HCT116 (cell line): ENCODE measurements at regions of chr20 and their contacts with region 1.

Region 1: DNA sequence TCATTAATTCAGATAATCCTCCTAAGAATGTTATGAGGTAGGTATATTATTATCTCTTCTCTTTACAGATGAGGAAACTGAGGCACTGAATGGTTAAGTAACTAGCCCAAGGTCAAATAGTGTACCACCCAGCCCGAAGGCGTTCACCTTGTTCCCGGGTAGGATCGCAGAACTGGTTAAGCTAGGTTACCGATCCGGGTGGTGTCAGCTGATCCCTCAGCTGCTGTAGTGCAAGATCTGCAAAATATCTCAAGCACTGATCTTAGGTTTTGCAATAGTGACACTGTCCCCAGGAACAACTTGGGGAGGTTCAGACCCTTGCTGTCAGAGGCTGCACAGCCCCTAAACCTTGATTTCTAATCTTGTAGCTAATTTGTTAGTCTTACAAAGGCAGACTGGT is 28.2 kb downstream of the SLC52A3 start:
- DNase-seq: no peak
- ATAC-seq: no peak
- H3K4me3 ChIP-seq: no peak overlapping the region
- H3K27ac ChIP-seq: no peak overlapping the region
- H3K4me1 ChIP-seq: peaks cover 0 to 7% of the 10 kb centered on the region in 2 experiments; a peak in 1 of 4 replicates
- H3K27me3 ChIP-seq: no peaks in the 10 kb centered on the region
- CTCF ChIP-seq: no peak
- POLR2A ChIP-seq: no peak
- RAD21 ChIP-seq: no peak

Region 2: DNA sequence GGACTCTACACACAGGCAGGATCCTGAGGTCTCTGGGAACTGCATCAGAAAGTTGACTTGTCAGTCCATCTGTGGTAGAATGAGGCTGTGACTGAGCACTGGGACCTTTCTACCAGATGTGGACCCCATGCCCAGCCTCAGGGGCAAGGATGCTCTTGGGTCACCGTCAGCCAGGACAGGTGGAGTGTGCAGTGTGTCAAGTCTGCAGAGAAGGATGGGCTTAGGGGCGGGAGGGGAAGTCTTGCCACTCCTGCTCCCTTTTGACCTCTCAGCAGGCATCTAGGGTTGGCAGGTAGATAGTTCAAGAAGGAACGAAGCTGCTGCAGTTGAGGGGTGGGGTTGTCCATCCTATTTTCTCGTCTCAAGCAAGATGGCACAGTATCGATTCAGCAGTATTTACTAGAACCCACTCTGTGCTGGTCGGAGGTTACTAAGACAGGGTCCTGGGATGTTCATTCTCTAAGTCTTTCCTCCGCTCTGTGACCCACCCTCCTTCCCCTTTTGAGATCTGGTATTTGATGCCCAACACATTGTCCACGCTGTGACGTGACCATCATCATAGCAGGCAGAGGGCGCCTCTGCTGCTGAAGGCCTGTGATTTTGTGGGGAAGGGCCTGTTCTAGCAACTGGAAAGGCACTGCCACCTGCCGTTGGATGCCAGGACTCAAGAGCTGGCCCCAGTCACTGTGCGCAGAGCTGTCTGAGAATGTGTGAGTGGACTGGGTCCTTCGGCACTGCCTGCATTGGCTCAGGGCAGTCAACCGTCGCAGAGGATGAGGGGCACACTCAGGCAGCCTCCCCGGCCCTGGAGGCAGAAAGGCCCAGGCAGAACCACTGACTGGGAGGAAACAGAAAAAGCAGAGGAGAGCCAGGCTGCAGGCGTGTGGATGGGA is 308.9 kb before region 1 on chr20:
- CTCF ChIA-PET with region 1: interaction called, 21 read pairs
- POLR2A ChIA-PET with region 1: no interaction called
- RAD21 ChIA-PET with region 1: interaction called in 1 of 2 experiments, 3 read pairs
- intact Hi-C with region 1: no loop called
- DNase-seq: peak; percentile 69
- ATAC-seq: peak; percentile 89
- H3K4me3 ChIP-seq: no peak overlapping the region
- H3K27ac ChIP-seq: no peak overlapping the region
- H3K4me1 ChIP-seq: peaks cover 0 to 5% of the 10 kb centered on the region in 2 experiments; a peak in 1 of 4 replicates
- H3K27me3 ChIP-seq: no peaks in the 10 kb centered on the region
- CTCF ChIP-seq: peak; percentile 83 to 99 (median 91)
- POLR2A ChIP-seq: no peak
- RAD21 ChIP-seq: peak; percentile 86

Region 3: GRCh38 chr20:645318-646106 is 94.6 kb before region 1 on chr20:
- CTCF ChIA-PET with region 1: interaction called, 14 read pairs
- POLR2A ChIA-PET with region 1: no interaction called
- RAD21 ChIA-PET with region 1: no interaction called
- intact Hi-C with region 1: no loop called
- DNase-seq: peak; percentile 41
- ATAC-seq: peak; percentile 88
- H3K4me3 ChIP-seq: no peak overlapping the region
- H3K27ac ChIP-seq: peak overlapping the region; percentile 16
- H3K4me1 ChIP-seq: peaks cover 13 to 32% of the 10 kb centered on the region in 2 experiments
- H3K27me3 ChIP-seq: no peaks in the 10 kb centered on the region
- CTCF ChIP-seq: peak; percentile 78 to 94 (median 93)
- POLR2A ChIP-seq: no peak
- RAD21 ChIP-seq: peak; percentile 84

Region 4: DNA sequence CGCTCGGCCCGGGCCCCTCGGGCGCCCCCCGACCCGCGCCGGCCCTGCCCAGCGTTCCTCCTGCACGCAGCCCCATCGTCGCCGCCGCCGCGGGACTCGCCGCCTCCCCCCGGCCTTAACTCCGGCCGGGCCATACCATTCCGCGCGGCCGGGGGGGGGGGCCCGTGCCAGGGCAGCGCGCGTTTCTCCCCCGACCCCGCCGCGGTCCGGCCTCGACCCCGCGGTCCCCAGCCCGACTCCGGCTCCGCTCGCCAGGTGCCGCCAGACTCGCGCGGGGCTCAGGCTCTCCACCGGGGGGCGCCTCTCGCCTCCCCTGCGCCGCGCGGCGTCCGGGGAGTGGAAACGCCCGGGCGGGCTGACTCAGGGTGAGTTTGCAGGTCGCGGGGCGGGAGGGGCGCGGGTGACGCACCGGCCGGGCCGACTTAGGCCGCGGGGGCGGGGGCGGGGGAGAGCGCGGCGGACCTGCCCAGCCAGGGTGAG is 87.0 kb before region 1 on chr20 and contains the start of gene SRXN1:
- CTCF ChIA-PET with region 1: no interaction called
- POLR2A ChIA-PET with region 1: no interaction called
- RAD21 ChIA-PET with region 1: no interaction called
- intact Hi-C with region 1: loop called (anchors 1 kb)
- DNase-seq: peak; percentile 81
- ATAC-seq: peak; percentile 87
- H3K4me3 ChIP-seq: peak within 1 kb of the TSS; percentile 67 to 98
- H3K27ac ChIP-seq: peak within 1 kb of the TSS; percentile 92
- H3K4me1 ChIP-seq: peaks cover 11 to 26% of the 10 kb centered on the region in 2 experiments
- H3K27me3 ChIP-seq: no peaks in the 10 kb centered on the region
- CTCF ChIP-seq: peak; percentile 52 to 90 (median 64)
- POLR2A ChIP-seq: peak; percentile 70
- RAD21 ChIP-seq: peak; percentile 56
- total RNA-seq, gene SRXN1: 80.8 TPM

Region 5: GRCh38 chr20:667391-667964 is 72.7 kb before region 1 on chr20:
- CTCF ChIA-PET with region 1: interaction called, 8 read pairs
- POLR2A ChIA-PET with region 1: no interaction called
- RAD21 ChIA-PET with region 1: no interaction called
- intact Hi-C with region 1: loop called (anchors 2 kb)
- DNase-seq: no peak
- ATAC-seq: peak; percentile 87
- H3K4me3 ChIP-seq: no peak overlapping the region
- H3K27ac ChIP-seq: no peak overlapping the region
- H3K4me1 ChIP-seq: peaks cover 9 to 10% of the 10 kb centered on the region in 2 experiments; a peak in 3 of 4 replicates
- H3K27me3 ChIP-seq: no peaks in the 10 kb centered on the region
- CTCF ChIP-seq: peak; percentile 89 to 99 (median 97)
- POLR2A ChIP-seq: no peak
- RAD21 ChIP-seq: peak; percentile 68

Region 6: GRCh38 chr20:768426-768978 is 28.4 kb after region 1 on chr20 and contains the start of gene SLC52A3:
- CTCF ChIA-PET with region 1: interaction called, 12 read pairs
- POLR2A ChIA-PET with region 1: no interaction called
- RAD21 ChIA-PET with region 1: no interaction called
- intact Hi-C with region 1: no loop called
- DNase-seq: peak; percentile 86
- ATAC-seq: peak; percentile 95
- H3K4me3 ChIP-seq: peak within 1 kb of the TSS; percentile 58 to 64
- H3K27ac ChIP-seq: peak within 1 kb of the TSS; percentile 79
- H3K4me1 ChIP-seq: peaks cover 6 to 21% of the 10 kb centered on the region in 2 experiments; a peak in 2 of 4 replicates
- H3K27me3 ChIP-seq: no peaks in the 10 kb centered on the region
- CTCF ChIP-seq: peak; percentile 73 to 81 (median 79)
- POLR2A ChIP-seq: no peak
- RAD21 ChIP-seq: peak; percentile 90
- total RNA-seq, gene SLC52A3: 10.2 TPM